ENCODE measurements at regions of chr13 and their contacts with region 1.

Region 1: GRCh38 chr13:33285420-33286124 is at the start of gene STARD13:
- DNase-seq: peak; percentile 97
- H3K4me3 Mint-ChIP-seq: peak within 1 kb of the TSS; percentile 91
- H3K27ac Mint-ChIP-seq: peak within 1 kb of the TSS; percentile 95
- H3K4me1 Mint-ChIP-seq: peaks cover 30% of the 10 kb centered on the region
- H3K27me3 Mint-ChIP-seq: no peaks in the 10 kb centered on the region
- CTCF ChIP-seq: peak; percentile 12
- total RNA-seq, gene STARD13: 26.3 and 31.9 TPM in 2 replicates

Region 2: DNA sequence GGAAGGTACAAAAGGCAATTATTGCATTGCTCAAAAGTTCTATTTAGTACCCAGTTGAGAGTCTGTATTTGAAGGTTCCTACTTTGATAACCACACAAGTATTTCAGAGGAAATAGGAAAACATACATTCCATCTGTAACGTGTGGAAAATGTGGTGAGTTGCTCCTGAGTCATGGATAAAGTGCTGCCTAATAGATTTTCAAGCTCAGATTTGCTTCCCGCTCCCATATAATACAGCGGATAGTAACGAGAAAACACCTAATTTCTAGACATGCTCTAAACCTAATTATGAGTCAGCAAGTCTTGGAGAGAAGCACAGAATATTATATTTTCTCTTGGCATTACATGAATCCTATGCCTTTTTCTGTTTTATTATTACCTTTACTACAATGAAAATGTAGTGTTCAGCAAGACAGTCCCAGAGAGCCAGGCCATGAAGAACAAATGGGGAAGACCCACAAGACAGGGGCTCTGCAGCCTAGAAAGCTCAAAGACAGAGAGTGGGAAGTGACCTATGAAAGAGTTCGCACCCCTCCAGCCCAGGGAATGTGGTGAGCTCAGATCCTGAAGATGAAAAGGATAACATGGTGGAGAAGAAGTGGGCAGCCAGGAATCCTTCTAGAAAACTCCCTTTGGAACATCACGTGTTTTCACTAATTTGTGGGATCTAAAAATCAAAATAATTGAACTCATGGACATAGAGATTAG is 116.1 kb before region 1 on chr13:
- CTCF ChIA-PET with region 1: interaction called, 4 read pairs
- POLR2A ChIA-PET with region 1: interaction called, 14 read pairs
- intact Hi-C with region 1: no loop called
- DNase-seq: peak; percentile 70
- H3K4me3 Mint-ChIP-seq: peak overlapping the region; percentile 28
- H3K27ac Mint-ChIP-seq: peak overlapping the region; percentile 99
- H3K4me1 Mint-ChIP-seq: peaks cover 71% of the 10 kb centered on the region
- H3K27me3 Mint-ChIP-seq: no peaks in the 10 kb centered on the region
- CTCF ChIP-seq: no peak

Region 3: GRCh38 chr13:33218001-33218400 is 67.6 kb before region 1 on chr13:
- CTCF ChIA-PET with region 1: no interaction called
- POLR2A ChIA-PET with region 1: interaction called, 97 read pairs
- intact Hi-C with region 1: no loop called
- DNase-seq: peak; percentile 62
- H3K4me3 Mint-ChIP-seq: peak overlapping the region; percentile 37
- H3K27ac Mint-ChIP-seq: peak overlapping the region; percentile 94
- H3K4me1 Mint-ChIP-seq: peaks cover 67% of the 10 kb centered on the region
- H3K27me3 Mint-ChIP-seq: no peaks in the 10 kb centered on the region
- CTCF ChIP-seq: no peak

Region 4: DNA sequence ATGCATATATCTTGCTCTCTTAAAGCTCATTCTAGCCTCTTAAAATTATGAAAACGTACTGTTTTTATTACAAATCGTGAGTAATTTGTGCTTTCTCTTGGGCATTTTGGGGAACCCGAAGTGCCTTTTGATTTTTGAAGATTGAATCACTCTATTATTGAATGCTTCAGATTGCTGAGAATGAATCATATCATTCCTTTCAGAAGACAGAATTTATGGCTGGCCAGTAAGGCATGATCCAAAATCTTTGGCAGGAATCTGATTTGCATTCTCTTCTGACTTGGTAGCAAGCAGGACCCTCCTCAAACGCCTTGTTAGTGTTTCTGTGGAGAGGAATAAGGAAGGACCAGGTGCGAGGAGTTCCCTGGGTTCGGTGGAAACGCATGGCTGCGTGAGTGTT is 49.6 kb before region 1 on chr13:
- CTCF ChIA-PET with region 1: no interaction called
- POLR2A ChIA-PET with region 1: interaction called, 97 read pairs
- intact Hi-C with region 1: loop called (anchors 1 kb)
- DNase-seq: peak; percentile 51
- H3K4me3 Mint-ChIP-seq: peak overlapping the region; percentile 42
- H3K27ac Mint-ChIP-seq: peak overlapping the region; percentile 67
- H3K4me1 Mint-ChIP-seq: peaks cover 56% of the 10 kb centered on the region
- H3K27me3 Mint-ChIP-seq: no peaks in the 10 kb centered on the region
- CTCF ChIP-seq: no peak

Region 5: DNA sequence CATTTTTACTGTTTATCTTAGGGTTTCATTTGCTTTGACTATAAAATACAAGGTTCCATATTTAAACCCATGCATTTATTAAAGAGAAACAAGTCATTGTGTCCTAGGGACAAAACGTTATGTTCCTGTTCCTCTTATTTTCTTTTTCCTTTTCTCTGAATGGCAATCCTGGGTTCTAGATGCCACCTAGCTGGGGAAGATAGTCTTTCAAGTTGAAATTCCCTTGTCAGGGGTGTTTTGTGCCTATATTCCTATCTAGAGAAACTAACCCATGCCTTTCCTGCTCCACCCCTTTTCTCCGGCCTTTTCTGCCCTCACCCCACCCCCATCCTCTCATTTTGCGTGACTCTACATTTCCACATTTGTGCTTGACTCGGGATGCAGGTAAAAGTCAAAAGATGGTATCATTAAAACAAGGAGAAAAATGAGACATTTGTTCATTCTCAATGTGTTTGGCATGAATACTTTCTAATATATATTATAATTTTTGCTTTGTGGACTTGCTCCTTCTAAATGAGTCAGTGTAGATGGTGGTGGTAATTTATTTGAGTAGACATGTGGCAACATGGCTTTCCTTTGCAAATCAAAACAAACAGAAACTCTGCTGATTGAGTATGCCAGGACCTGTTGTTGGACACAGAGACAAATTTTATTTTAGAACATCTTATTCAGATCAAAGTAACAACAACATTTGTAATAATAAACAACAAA is 26.7 kb after region 1 on chr13:
- CTCF ChIA-PET with region 1: interaction called, 4 read pairs
- POLR2A ChIA-PET with region 1: interaction called, 12 read pairs
- intact Hi-C with region 1: no loop called
- DNase-seq: peak; percentile 54
- H3K4me3 Mint-ChIP-seq: no peak overlapping the region
- H3K27ac Mint-ChIP-seq: no peak overlapping the region
- H3K4me1 Mint-ChIP-seq: peaks cover 5% of the 10 kb centered on the region
- H3K27me3 Mint-ChIP-seq: no peaks in the 10 kb centered on the region
- CTCF ChIP-seq: peak; percentile 59

Region 6: GRCh38 chr13:33340629-33341028 is 55.1 kb after region 1 on chr13:
- CTCF ChIA-PET with region 1: no interaction called
- POLR2A ChIA-PET with region 1: no interaction called
- intact Hi-C with region 1: no loop called
- DNase-seq: peak; percentile 49
- H3K4me3 Mint-ChIP-seq: no peak overlapping the region
- H3K27ac Mint-ChIP-seq: no peak overlapping the region
- H3K4me1 Mint-ChIP-seq: no peaks in the 10 kb centered on the region
- H3K27me3 Mint-ChIP-seq: no peaks in the 10 kb centered on the region
- CTCF ChIP-seq: no peak

Measured in MCF 10A (cell line).